ENCODE measurements at regions of chr2 and their contacts with region 1.

Region 1: GRCh38 chr2:223970343-223971128 is 13.3 kb downstream of the MRPL44 start:
- DNase-seq: peak; percentile 76
- ATAC-seq: no peak
- H3K4me3 ChIP-seq: no peak overlapping the region
- H3K4me3 Mint-ChIP-seq: no peak overlapping the region
- H3K27ac ChIP-seq: no peak overlapping the region
- H3K27ac Mint-ChIP-seq: no peak overlapping the region
- H3K4me1 ChIP-seq: peaks cover 0 to 3% of the 10 kb centered on the region in 2 donors
- H3K4me1 Mint-ChIP-seq: peaks cover 5% of the 10 kb centered on the region
- H3K27me3 ChIP-seq: no peaks in the 10 kb centered on the region
- H3K27me3 Mint-ChIP-seq: no peaks in the 10 kb centered on the region
- CTCF ChIP-seq: peak; percentile 94

Region 2: DNA sequence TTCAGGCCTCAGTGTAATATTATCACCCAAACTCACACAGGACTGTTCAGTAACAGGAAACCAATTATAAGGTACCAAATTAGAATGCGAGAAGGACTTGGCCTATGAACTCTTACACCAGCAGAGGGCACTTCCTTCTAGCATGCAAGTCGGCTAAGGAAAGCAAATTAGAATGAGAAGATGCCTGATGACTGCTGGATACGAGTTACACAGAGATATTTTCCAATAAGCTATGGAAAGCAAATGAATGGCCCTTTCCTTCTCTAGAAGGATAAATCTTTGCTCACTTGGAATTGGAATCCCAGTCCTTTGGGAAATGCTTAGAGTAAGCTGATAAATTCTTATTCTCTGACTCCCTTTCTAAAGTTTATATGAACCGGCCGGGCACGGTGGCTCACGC is 243.0 kb before region 1 on chr2:
- CTCF ChIA-PET with region 1: interaction called, 12 read pairs
- POLR2A ChIA-PET with region 1: no interaction called
- intact Hi-C with region 1: no loop called
- DNase-seq: peak; percentile 62
- ATAC-seq: peak; percentile 60
- H3K4me3 ChIP-seq: no peak overlapping the region
- H3K4me3 Mint-ChIP-seq: no peak overlapping the region
- H3K27ac ChIP-seq: no peak overlapping the region
- H3K27ac Mint-ChIP-seq: no peak overlapping the region
- H3K4me1 ChIP-seq: peaks cover 0 to 4% of the 10 kb centered on the region in 2 donors
- H3K4me1 Mint-ChIP-seq: peaks cover 6% of the 10 kb centered on the region
- H3K27me3 ChIP-seq: no peaks in the 10 kb centered on the region
- H3K27me3 Mint-ChIP-seq: no peaks in the 10 kb centered on the region
- CTCF ChIP-seq: peak; percentile 67

Region 3: GRCh38 chr2:223944703-223945531 is 25.6 kb before region 1 on chr2 and contains the start of gene WDFY1:
- CTCF ChIA-PET with region 1: interaction called, 11 read pairs
- POLR2A ChIA-PET with region 1: no interaction called
- intact Hi-C with region 1: no loop called
- DNase-seq: peak; percentile 87
- ATAC-seq: peak; percentile 93
- H3K4me3 ChIP-seq: peak within 1 kb of the TSS; percentile 58 to 92 (median 89)
- H3K4me3 Mint-ChIP-seq: peak within 1 kb of the TSS; percentile 94
- H3K27ac ChIP-seq: peak within 1 kb of the TSS; percentile 35 to 87
- H3K27ac Mint-ChIP-seq: peak within 1 kb of the TSS; percentile 94
- H3K4me1 ChIP-seq: peaks cover 21 to 44% of the 10 kb centered on the region in 2 donors
- H3K4me1 Mint-ChIP-seq: peaks cover 50% of the 10 kb centered on the region
- H3K27me3 ChIP-seq: no peaks in the 10 kb centered on the region
- H3K27me3 Mint-ChIP-seq: no peaks in the 10 kb centered on the region
- CTCF ChIP-seq: no peak
- total RNA-seq, gene WDFY1: 71.2 and 76.0 TPM in 2 replicates

Region 4: DNA sequence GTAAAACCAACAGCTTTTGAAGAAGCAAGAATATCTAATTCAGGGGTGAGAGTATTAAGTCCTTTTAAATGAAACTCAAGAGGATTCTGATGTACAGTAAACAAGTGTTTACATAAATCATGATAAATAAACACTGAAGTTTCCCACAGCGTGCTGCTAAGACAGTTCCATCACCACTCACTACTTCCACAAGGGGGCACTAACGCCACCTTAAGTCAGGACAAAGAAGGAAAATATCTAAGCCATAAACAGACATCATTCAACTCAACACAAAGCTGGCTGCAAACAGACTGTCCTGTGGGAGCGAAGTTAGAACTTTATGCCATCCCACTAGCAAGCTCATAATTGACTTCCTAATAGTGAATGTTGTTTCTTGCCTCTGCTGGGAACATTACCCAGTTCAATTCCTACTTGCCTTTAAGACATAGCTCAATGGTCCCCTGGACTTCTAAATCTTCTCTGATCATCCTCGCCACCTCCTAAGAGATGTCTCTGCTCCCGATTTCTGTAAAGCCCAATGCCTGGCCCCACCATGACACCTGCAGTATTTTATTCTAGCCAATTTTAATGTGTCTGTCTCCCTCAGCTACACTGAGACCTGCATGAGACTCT is 23.2 kb after region 1 on chr2:
- CTCF ChIA-PET with region 1: interaction called, 61 read pairs
- POLR2A ChIA-PET with region 1: no interaction called
- intact Hi-C with region 1: loop called (anchors 2 kb)
- DNase-seq: peak; percentile 78
- ATAC-seq: peak; percentile 43
- H3K4me3 ChIP-seq: no peak overlapping the region
- H3K4me3 Mint-ChIP-seq: no peak overlapping the region
- H3K27ac ChIP-seq: no peak overlapping the region
- H3K27ac Mint-ChIP-seq: no peak overlapping the region
- H3K4me1 ChIP-seq: no peaks in the 10 kb centered on the region
- H3K4me1 Mint-ChIP-seq: no peaks in the 10 kb centered on the region
- H3K27me3 ChIP-seq: no peaks in the 10 kb centered on the region
- H3K27me3 Mint-ChIP-seq: no peaks in the 10 kb centered on the region
- CTCF ChIP-seq: peak; percentile 85

Region 5: DNA sequence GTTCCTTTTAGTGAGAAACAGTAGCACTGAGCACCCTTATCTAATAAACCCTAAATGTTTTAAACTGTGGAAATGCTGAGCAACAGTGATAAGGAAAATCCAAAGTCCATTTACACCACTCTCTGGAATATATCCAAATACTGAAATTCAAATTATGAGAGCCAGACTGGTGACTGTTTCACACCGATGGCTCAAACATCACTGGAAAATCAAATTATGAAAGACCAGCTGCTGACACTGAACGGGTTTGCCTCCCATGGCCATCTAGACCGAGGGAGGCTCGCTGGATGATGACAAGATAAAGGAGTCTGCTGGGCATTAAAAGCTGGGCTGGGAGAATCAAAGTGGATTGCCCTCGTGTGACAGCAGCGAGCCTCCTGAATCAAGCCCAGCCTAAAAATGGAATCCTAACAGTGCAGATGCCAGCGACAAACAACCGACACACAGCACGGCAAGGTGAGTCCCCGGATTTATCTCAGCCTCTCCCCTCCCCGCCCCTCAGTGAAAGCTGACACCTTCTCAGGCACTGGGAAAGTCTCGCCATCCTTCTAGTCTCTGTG is 38.2 kb after region 1 on chr2:
- CTCF ChIA-PET with region 1: no interaction called
- POLR2A ChIA-PET with region 1: no interaction called
- intact Hi-C with region 1: no loop called
- DNase-seq: no peak
- ATAC-seq: no peak
- H3K4me3 ChIP-seq: no peak overlapping the region
- H3K4me3 Mint-ChIP-seq: no peak overlapping the region
- H3K27ac ChIP-seq: no peak overlapping the region
- H3K27ac Mint-ChIP-seq: no peak overlapping the region
- H3K4me1 ChIP-seq: no peaks in the 10 kb centered on the region
- H3K4me1 Mint-ChIP-seq: no peaks in the 10 kb centered on the region
- H3K27me3 ChIP-seq: no peaks in the 10 kb centered on the region
- H3K27me3 Mint-ChIP-seq: no peaks in the 10 kb centered on the region
- CTCF ChIP-seq: no peak

Region 6: DNA sequence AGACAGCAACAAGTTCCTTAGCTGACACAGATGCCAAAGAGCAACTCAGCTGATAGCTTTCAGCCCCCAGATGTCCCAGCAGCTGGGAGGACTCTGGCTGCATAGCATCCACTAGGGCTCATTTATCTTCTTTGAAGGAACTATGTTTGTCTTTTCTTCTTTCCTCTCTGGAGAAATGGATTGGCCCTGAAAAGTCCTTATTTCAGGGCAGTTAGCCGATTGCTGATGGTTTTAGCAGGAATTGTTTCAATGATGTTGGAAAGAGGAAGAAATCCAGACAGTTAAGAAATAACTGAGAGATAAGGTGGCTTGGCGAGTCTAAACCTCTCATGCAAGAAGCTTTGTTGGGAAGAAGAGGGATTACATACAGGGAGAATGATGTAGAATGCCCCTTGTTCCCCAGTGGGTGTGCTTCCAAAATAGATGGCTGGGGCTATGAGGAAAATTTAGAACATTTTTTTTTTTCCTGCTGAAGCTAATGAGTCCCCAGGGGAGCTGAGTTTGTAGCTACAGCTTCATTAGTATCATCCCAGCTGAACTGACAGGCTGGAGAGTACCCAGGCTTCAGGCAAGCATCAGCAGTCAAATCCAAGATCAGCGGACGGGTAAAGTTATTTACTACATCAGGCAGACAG is 102.1 kb after region 1 on chr2:
- CTCF ChIA-PET with region 1: no interaction called
- POLR2A ChIA-PET with region 1: no interaction called
- intact Hi-C with region 1: no loop called
- DNase-seq: no peak
- ATAC-seq: no peak
- H3K4me3 ChIP-seq: no peak overlapping the region
- H3K4me3 Mint-ChIP-seq: no peak overlapping the region
- H3K27ac ChIP-seq: no peak overlapping the region
- H3K27ac Mint-ChIP-seq: no peak overlapping the region
- H3K4me1 ChIP-seq: no peaks in the 10 kb centered on the region
- H3K4me1 Mint-ChIP-seq: no peaks in the 10 kb centered on the region
- H3K27me3 ChIP-seq: peaks cover 0 to 3% (median 0%) of the 10 kb centered on the region in 4 experiments
- H3K27me3 Mint-ChIP-seq: peaks cover 28% of the 10 kb centered on the region
- CTCF ChIP-seq: no peak

Region 7: DNA sequence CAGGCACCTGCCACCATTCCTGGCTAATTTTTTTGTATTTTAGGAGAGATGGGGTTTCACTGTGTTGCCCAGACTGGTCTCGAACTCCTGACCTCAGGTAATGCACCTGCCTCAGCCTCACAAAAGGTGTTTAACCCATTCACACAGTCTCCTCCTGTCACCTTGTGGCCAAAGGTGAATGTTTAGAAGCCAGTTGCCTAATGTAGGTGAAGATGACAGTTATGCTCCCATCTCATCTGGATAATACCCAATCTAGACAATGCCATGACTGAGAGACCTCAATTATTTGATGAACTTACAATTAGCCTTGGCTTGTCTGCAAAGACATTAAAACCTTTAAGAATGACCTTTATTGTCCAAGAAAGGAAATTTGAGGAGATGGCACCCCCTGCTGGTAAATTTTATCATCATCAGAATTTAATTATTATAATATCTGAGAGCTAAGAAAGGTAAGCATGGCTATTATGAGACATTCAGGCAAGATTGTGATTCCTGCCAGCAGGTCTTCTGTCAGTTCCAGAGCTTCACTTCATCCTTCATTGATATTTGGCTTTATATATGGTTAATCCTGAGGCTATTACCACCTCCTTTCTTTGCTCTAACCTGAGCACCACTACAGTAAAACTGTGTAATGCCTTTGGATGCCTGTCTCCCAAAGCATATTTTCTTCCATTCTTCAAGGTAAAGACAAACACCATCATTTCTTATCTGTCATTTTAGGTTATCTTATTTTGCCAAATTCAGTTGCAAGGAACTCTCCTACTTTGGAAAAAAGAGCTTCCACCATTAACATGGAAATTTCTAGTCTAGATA is 313.8 kb after region 1 on chr2:
- CTCF ChIA-PET with region 1: interaction called, 211 read pairs
- POLR2A ChIA-PET with region 1: no interaction called
- intact Hi-C with region 1: no loop called
- DNase-seq: peak; percentile 64
- ATAC-seq: no peak
- H3K4me3 ChIP-seq: no peak overlapping the region
- H3K4me3 Mint-ChIP-seq: no peak overlapping the region
- H3K27ac ChIP-seq: no peak overlapping the region
- H3K27ac Mint-ChIP-seq: no peak overlapping the region
- H3K4me1 ChIP-seq: no peaks in the 10 kb centered on the region
- H3K4me1 Mint-ChIP-seq: no peaks in the 10 kb centered on the region
- H3K27me3 ChIP-seq: peaks cover 0 to 10% (median 0%) of the 10 kb centered on the region in 4 experiments
- H3K27me3 Mint-ChIP-seq: peaks cover 34% of the 10 kb centered on the region
- CTCF ChIP-seq: peak; percentile 82

Region 8: DNA sequence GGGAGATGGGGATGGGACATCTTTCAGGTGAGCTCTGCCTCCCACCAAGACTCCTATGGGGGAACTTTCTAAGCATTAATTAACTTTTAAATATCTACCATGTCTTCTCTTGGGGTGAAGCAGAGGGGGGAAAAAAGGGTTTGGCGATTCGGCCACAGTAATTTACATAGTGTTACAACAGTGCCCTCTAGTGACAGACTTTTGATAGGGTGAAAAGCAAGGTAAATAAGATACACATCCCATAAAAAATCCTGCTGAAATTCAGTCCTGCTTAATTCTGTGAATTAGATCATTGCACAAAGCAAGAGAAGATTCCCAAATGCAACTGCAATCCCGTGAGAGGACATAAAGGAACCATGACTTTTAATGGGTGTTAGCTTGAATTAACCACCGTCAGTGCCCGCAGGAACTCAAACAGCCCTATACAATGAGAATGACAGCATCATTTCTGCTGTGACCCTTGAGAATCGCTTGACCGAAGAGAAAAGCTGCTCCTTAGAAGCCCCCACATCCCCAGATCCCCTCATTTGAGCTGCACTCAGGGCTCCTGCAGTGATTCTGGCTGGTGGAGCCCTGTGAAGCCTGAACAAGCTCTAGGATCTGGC is 398.6 kb after region 1 on chr2:
- CTCF ChIA-PET with region 1: interaction called, 10 read pairs
- POLR2A ChIA-PET with region 1: no interaction called
- intact Hi-C with region 1: no loop called
- DNase-seq: peak; percentile 58
- ATAC-seq: no peak
- H3K4me3 ChIP-seq: no peak overlapping the region
- H3K4me3 Mint-ChIP-seq: no peak overlapping the region
- H3K27ac ChIP-seq: no peak overlapping the region
- H3K27ac Mint-ChIP-seq: no peak overlapping the region
- H3K4me1 ChIP-seq: no peaks in the 10 kb centered on the region
- H3K4me1 Mint-ChIP-seq: no peaks in the 10 kb centered on the region
- H3K27me3 ChIP-seq: no peaks in the 10 kb centered on the region
- H3K27me3 Mint-ChIP-seq: no peaks in the 10 kb centered on the region
- CTCF ChIP-seq: peak; percentile 81